H1 (cell line): ENCODE measurements at regions of chr17 and their contacts with region 1.

Region 1: GRCh38 chr17:67559377-67559966 is 158.3 kb upstream of the NOL11 start:
- DNase-seq: peak in 1 of 2 experiments; percentile 61
- H3K4me3 ChIP-seq: no peak overlapping the region
- H3K27ac ChIP-seq: no peak overlapping the region
- H3K4me1 ChIP-seq: no peaks in the 10 kb centered on the region; a peak in 1 of 7 replicates
- H3K27me3 ChIP-seq: no peaks in the 10 kb centered on the region
- CTCF ChIP-seq: peak; percentile 56 to 81 (median 70)
- EP300 ChIP-seq: no peak
- POLR2A ChIP-seq: no peak
- RAD21 ChIP-seq: peak; percentile 60 to 72

Region 2: GRCh38 chr17:67376737-67377487 is 182.6 kb before region 1 on chr17 and contains the start of gene PITPNC1:
- CTCF ChIA-PET with region 1: interaction called, 11 read pairs
- POLR2A ChIA-PET with region 1: no interaction called
- DNase-seq: peak in 1 of 2 experiments; percentile 89
- H3K4me3 ChIP-seq: peak within 1 kb of the TSS; percentile 80 to 95 (median 91)
- H3K27ac ChIP-seq: peak within 1 kb of the TSS; percentile 77
- H3K4me1 ChIP-seq: peaks cover 2 to 5% (median 4%) of the 10 kb centered on the region in 4 experiments; a peak in 6 of 7 replicates
- H3K27me3 ChIP-seq: no peaks in the 10 kb centered on the region
- CTCF ChIP-seq: no peak
- EP300 ChIP-seq: no peak
- POLR2A ChIP-seq: peak; percentile 70 to 76
- RAD21 ChIP-seq: no peak
- total RNA-seq, gene PITPNC1: 53.8 and 54.7 TPM in 2 replicates

Region 3: DNA sequence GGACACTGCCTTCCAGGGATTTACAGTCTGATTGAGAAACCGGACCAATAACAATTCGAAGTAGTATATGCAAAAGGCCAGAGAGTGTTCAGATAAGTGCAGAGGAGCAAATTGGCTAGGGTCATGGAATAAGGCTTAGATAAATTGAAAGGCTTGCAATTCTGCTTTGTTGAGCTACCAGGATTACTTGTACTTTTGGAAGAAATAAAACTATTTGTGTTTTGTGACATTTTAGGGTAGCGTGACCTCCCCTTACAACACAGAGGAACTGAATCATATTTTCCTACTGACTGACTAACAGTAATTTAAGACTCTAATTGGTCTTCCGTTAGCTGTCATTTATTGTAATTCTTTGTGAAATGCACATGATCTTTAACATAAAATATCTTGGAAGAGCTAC is 77.7 kb before region 1 on chr17:
- CTCF ChIA-PET with region 1: no interaction called
- POLR2A ChIA-PET with region 1: no interaction called
- DNase-seq: no peak
- H3K4me3 ChIP-seq: no peak overlapping the region
- H3K27ac ChIP-seq: no peak overlapping the region
- H3K4me1 ChIP-seq: peaks cover 0 to 13% (median 5%) of the 10 kb centered on the region in 4 experiments; a peak in 5 of 7 replicates
- H3K27me3 ChIP-seq: no peaks in the 10 kb centered on the region
- CTCF ChIP-seq: no peak
- EP300 ChIP-seq: no peak
- POLR2A ChIP-seq: no peak
- RAD21 ChIP-seq: no peak

Region 4: DNA sequence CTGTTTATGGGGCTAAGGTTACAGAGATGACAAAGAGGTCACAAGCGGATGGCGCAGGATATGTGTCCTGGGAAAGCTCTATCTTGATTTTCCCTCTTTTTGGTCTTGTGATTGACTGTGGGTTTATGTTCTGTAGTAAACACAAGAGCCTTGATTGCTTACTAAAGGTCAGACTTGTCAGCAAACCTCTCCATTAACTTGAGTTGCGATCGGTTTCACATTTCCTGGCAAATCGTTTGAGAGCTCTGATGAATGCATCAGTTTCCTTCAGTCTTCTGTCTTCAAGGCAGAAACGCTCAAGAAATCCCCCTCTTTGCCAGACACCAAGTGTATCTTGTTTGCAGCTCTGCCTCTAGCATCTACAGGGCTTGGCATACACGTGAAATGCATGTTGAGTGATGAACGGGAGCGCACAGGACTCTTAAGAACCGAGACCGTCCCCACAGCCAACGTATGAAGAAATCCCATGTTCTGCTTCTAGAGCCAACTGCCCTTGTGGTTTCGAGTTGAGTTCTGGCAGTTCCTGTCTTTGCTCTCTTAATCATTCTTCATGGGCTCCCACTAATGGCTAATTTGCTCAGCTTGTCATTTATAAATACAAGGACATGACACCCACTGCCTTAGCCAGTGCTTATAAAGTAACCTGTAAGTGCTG is 39.1 kb before region 1 on chr17:
- CTCF ChIA-PET with region 1: no interaction called
- POLR2A ChIA-PET with region 1: no interaction called
- DNase-seq: no peak
- H3K4me3 ChIP-seq: no peak overlapping the region
- H3K27ac ChIP-seq: no peak overlapping the region
- H3K4me1 ChIP-seq: peaks cover 10 to 22% (median 18%) of the 10 kb centered on the region in 4 experiments
- H3K27me3 ChIP-seq: no peaks in the 10 kb centered on the region
- CTCF ChIP-seq: no peak
- EP300 ChIP-seq: no peak
- POLR2A ChIP-seq: no peak
- RAD21 ChIP-seq: no peak

Region 5: DNA sequence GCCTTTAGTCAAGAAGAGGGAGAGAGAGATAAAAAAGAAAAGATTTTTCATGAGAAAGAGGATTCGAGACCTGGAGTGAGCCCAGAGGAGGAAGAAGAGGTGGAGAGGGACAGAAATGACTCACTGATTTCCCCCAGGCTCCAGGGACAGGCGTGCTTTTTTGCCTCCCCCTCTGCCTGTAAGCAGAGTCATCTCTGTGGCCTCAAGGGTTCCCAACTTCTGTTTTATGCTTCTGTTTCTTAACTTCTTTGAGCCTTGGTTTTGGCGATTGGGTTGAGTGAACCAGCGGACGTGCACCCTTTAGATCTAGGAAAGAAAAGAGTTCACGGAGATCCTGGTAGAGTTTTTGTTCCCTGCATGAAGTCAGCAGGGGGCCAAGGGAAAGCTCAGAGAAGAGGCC is 10.4 kb after region 1 on chr17:
- CTCF ChIA-PET with region 1: interaction called, 18 read pairs
- POLR2A ChIA-PET with region 1: no interaction called
- DNase-seq: no peak
- H3K4me3 ChIP-seq: no peak overlapping the region
- H3K27ac ChIP-seq: no peak overlapping the region
- H3K4me1 ChIP-seq: no peaks in the 10 kb centered on the region
- H3K27me3 ChIP-seq: no peaks in the 10 kb centered on the region
- CTCF ChIP-seq: no peak
- EP300 ChIP-seq: no peak
- POLR2A ChIP-seq: no peak
- RAD21 ChIP-seq: no peak

Region 6: GRCh38 chr17:67584991-67585602 is 25.6 kb after region 1 on chr17:
- CTCF ChIA-PET with region 1: interaction called, 12 read pairs
- POLR2A ChIA-PET with region 1: no interaction called
- DNase-seq: no peak
- H3K4me3 ChIP-seq: no peak overlapping the region
- H3K27ac ChIP-seq: no peak overlapping the region
- H3K4me1 ChIP-seq: no peaks in the 10 kb centered on the region; a peak in 2 of 7 replicates
- H3K27me3 ChIP-seq: no peaks in the 10 kb centered on the region
- CTCF ChIP-seq: no peak
- EP300 ChIP-seq: no peak
- POLR2A ChIP-seq: no peak
- RAD21 ChIP-seq: no peak

Region 7: DNA sequence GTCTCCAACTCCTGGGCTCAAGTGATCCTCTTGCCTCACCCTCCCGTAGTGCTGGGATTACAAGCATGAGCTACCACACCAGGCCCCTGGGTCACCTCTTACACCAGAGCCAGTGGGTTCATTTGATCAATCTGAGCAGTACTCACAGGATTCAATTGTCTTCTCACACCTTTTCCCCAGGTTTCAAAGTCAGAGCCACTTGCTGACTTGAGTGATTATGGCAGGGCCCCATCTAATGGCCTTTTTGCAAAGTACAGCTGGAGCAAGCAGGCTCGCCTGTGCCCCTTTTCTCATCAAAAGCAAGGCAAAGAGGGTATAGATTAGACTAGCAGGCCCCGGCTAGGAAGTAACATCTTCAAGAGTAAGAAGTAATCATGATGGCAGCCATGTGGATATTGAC is 43.5 kb after region 1 on chr17:
- CTCF ChIA-PET with region 1: interaction called, 28 read pairs
- POLR2A ChIA-PET with region 1: no interaction called
- DNase-seq: peak; percentile 21 to 57
- H3K4me3 ChIP-seq: no peak overlapping the region
- H3K27ac ChIP-seq: no peak overlapping the region
- H3K4me1 ChIP-seq: peaks cover 0 to 4% (median 0%) of the 10 kb centered on the region in 4 experiments; a peak in 2 of 7 replicates
- H3K27me3 ChIP-seq: no peaks in the 10 kb centered on the region
- CTCF ChIP-seq: peak; percentile 44 to 84 (median 81)
- EP300 ChIP-seq: no peak
- POLR2A ChIP-seq: no peak
- RAD21 ChIP-seq: peak; percentile 89 to 91